ENCODE measurements at regions of chr3 and their contacts with region 1.

Region 1: GRCh38 chr3:12273045-12273695 is 15.7 kb upstream of the PPARG start:
- DNase-seq: peak; percentile 40
- ATAC-seq: peak; percentile 100
- H3K4me3 ChIP-seq: no peak overlapping the region
- H3K27ac ChIP-seq: no peak overlapping the region
- H3K4me1 ChIP-seq: no peaks in the 10 kb centered on the region
- H3K27me3 ChIP-seq: no peaks in the 10 kb centered on the region
- CTCF ChIP-seq: no peak
- EP300 ChIP-seq: peak in 1 of 2 experiments; percentile 56; a peak in 1 of 4 replicates
- POLR2A ChIP-seq: no peak
- RAD21 ChIP-seq: no peak

Region 2: DNA sequence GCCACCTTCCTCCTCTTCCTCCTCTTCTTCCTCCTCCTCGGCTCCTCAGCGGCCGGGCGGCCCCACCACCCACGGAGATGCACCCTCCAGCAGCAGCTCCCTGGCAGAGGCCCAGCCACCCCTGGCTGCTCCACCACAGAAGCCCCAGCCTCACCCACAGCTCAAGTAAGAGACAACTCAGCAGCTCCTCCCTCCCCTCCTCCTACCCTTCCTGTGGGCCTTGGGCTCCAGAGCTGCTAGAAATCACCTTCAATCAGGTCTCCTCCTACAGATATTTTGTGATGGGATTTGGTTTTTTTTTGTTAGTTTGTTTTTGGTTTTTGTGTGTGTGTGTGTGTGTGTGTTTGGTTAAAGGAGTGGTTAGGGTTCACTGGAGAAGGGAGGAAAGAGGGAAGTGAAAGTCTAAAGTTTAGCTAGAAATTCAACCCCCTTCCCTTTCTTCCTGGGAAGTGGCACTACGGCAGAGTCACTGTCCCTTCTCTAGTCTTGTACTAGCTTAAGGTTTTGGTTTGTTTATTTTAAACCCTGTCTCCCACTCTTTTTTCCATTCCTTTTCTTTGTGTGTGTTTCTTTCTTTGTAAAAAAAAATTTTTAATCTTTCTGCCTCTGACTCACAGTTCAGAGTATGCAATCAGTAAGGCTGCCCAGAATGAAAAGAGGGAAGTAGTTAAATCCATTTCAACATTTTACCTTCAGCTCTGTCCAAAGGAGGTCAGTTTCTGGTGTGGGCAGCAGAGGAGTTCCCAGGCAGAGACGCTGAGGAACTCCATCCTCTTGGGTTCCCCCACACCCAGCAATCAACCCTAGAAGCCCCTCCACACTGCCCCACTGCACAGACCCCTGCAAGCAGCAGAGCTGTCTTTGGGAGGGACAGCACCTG is 85.5 kb before region 1 on chr3:
- CTCF ChIA-PET with region 1: no interaction called
- POLR2A ChIA-PET with region 1: interaction called, 3 read pairs
- RAD21 ChIA-PET with region 1: interaction called, 4 read pairs
- SMC1A ChIA-PET with region 1: interaction called, 10 read pairs
- in situ Hi-C with region 1: no loop called
- intact Hi-C with region 1: loop called (anchors 5 kb)
- DNase-seq: peak; percentile 61
- ATAC-seq: peak; percentile 92
- H3K4me3 ChIP-seq: no peak overlapping the region
- H3K27ac ChIP-seq: peak overlapping the region; percentile 47
- H3K4me1 ChIP-seq: peaks cover 20% of the 10 kb centered on the region
- H3K27me3 ChIP-seq: no peaks in the 10 kb centered on the region
- CTCF ChIP-seq: no peak
- EP300 ChIP-seq: peak; percentile 32 to 60; a peak in 2 of 4 replicates
- POLR2A ChIP-seq: no peak
- RAD21 ChIP-seq: no peak

Measured in GM12878 (cell line).